Transverse colon (tissue), 4 donors: ENCODE measurements at regions of chr11 and their contacts with region 1.

Region 1: GRCh38 chr11:27672836-27673464 is 27.3 kb downstream of the BDNF start:
- DNase-seq: no peak
- H3K4me3 ChIP-seq: no peak overlapping the region
- H3K27ac ChIP-seq: no peak overlapping the region
- H3K4me1 ChIP-seq: no peaks in the 10 kb centered on the region
- H3K27me3 ChIP-seq: no peaks in the 10 kb centered on the region
- CTCF ChIP-seq: no peak
- EP300 ChIP-seq: no peak
- POLR2A ChIP-seq: no peak

Region 2: DNA sequence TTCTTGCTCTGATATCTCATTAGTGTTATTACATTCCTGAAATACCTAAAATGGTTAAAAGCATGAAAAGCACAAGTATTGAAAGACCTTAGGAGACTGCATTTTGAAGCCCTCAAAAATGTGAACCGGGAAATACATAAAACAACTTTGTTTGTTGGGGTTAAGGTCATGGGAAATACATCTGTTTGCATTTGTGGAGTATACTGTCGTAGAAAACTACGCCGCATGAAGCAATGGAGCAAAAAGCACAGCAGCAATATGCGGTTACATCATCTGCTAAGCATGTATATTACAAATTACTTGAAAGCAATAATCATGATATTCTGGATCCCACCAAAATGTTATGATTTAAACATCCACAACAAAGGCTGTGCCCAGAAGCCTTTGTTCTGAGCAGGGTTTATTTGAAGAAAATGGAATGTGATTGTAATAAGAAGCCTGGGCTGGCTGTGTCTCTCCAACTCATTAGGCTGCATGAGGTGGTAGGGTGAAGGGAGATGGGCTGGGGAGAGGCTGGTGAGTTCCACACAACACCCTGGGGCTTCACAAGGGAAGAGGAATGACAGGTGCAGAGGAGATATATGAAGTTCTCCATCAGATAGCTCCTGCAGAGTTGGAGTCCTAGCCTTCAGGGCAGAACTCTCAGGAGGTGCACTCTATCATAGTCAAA is 101.7 kb before region 1 on chr11:
- in situ Hi-C with region 1: loop called in 1 of 4 experiments (anchors 25 kb)
- intact Hi-C with region 1: no loop called
- DNase-seq: no peak
- H3K4me3 ChIP-seq: no peak overlapping the region
- H3K27ac ChIP-seq: no peak overlapping the region
- H3K4me1 ChIP-seq: no peaks in the 10 kb centered on the region
- H3K27me3 ChIP-seq: no peaks in the 10 kb centered on the region
- CTCF ChIP-seq: no peak
- EP300 ChIP-seq: no peak
- POLR2A ChIP-seq: no peak

Region 3: GRCh38 chr11:27720277-27720830 is 47.4 kb after region 1 on chr11:
- in situ Hi-C with region 1: no loop called
- intact Hi-C with region 1: no loop called
- DNase-seq: peak; percentile 21
- H3K4me3 ChIP-seq: no peak overlapping the region
- H3K27ac ChIP-seq: no peak overlapping the region
- H3K4me1 ChIP-seq: peaks cover 14 to 31% (median 27%) of the 10 kb centered on the region in 4 donors
- H3K27me3 ChIP-seq: peaks cover 97% of the 10 kb centered on the region
- CTCF ChIP-seq: no peak
- EP300 ChIP-seq: no peak
- POLR2A ChIP-seq: no peak